Activated CD8-positive, alpha-beta T cell treated with anti-CD3 and anti-CD28 coated beads for 36 hours (primary cell): ENCODE measurements at regions of chr7 and their contacts with region 1.

Region 1: GRCh38 chr7:100049441-100050311 is at the start of gene ZSCAN21:
- DNase-seq: peak; percentile 84
- ATAC-seq: peak; percentile 93
- H3K4me3 Mint-ChIP-seq: peak within 1 kb of the TSS; percentile 87
- H3K27ac Mint-ChIP-seq: peak within 1 kb of the TSS; percentile 94
- H3K4me1 Mint-ChIP-seq: peaks cover 16% of the 10 kb centered on the region
- H3K27me3 Mint-ChIP-seq: no peaks in the 10 kb centered on the region
- CTCF ChIP-seq: peak; percentile 19
- total RNA-seq, gene ZSCAN21: 6.3 to 6.9 TPM

Region 2: GRCh38 chr7:98548981-98549380 is 1500.7 kb before region 1 on chr7:
- CTCF ChIA-PET with region 1: no interaction called
- POLR2A ChIA-PET with region 1: no interaction called
- intact Hi-C with region 1: no loop called
- DNase-seq: no peak
- ATAC-seq: no peak
- H3K4me3 Mint-ChIP-seq: no peak overlapping the region
- H3K27ac Mint-ChIP-seq: no peak overlapping the region
- H3K4me1 Mint-ChIP-seq: no peaks in the 10 kb centered on the region
- H3K27me3 Mint-ChIP-seq: no peaks in the 10 kb centered on the region
- CTCF ChIP-seq: no peak

Region 3: DNA sequence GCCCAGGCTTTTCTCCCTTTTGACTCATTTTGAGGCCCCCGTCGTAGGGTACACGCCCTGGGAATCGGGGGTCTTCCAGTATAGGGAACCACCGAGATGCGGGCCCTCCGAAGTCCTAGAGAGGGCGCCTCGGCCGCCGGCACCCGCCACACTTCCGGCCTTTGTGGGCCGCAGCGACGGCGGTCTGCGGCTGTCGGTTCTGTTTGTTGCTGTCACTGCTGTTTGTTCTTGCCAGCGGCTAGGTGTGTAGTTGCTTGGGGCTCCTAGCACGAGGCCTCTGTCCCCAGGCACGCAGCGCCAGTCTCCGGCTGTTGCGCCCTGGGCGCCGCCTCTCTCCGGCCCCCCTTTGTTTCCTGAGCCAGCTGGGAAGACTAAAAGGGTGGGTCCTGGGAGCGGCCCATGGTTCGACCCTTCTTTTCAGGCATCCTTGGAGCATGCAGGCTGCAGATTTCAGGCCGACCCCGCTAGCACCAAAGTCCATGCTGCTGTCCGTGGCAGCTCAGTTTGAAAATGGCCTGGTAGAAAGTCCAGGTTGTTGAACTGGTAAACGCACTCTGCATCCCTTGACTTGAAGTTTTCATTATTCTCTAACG is 52.0 kb before region 1 on chr7:
- CTCF ChIA-PET with region 1: interaction called, 20 read pairs
- POLR2A ChIA-PET with region 1: no interaction called
- intact Hi-C with region 1: no loop called
- DNase-seq: peak; percentile 84
- ATAC-seq: peak; percentile 91
- H3K4me3 Mint-ChIP-seq: peak overlapping the region; percentile 75
- H3K27ac Mint-ChIP-seq: peak overlapping the region; percentile 89
- H3K4me1 Mint-ChIP-seq: peaks cover 15% of the 10 kb centered on the region
- H3K27me3 Mint-ChIP-seq: no peaks in the 10 kb centered on the region
- CTCF ChIP-seq: no peak

Region 4: DNA sequence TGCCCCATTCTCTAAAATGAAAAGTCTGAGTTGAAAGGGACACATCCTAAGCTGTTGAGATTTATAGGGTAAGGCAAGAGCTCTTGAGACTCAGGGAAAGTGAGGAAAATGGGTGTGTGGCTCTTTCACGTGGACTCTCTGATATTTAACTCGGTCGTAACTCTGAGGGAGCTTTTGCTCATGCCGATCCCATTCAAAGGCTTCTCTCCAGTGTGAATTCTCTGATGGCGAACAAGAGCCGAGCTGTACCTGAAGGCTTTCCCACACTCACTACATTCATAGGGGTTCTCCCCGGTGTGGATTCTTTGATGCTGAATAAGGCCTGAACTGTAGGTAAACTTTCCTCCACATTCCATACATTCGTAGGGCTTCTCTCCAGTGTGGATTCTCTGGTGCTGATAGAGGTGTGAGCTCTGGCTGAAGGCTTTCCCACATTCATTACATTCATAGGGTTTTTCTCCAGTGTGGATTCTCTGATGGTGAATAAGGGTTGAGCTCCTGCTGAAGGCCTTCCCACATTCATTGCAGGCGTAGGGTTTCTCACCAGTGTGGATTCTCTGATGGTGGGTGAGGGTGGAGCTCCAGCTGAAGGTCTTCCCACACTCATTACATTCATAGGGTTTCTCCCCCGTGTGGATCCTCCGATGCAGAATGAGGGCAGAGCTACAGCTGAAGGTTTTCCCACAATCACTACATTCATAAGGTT is 21.5 kb after region 1 on chr7:
- CTCF ChIA-PET with region 1: no interaction called
- POLR2A ChIA-PET with region 1: interaction called, 10 read pairs
- intact Hi-C with region 1: no loop called
- DNase-seq: no peak
- ATAC-seq: no peak
- H3K4me3 Mint-ChIP-seq: no peak overlapping the region
- H3K27ac Mint-ChIP-seq: no peak overlapping the region
- H3K4me1 Mint-ChIP-seq: no peaks in the 10 kb centered on the region
- H3K27me3 Mint-ChIP-seq: no peaks in the 10 kb centered on the region
- CTCF ChIP-seq: no peak

Region 5: DNA sequence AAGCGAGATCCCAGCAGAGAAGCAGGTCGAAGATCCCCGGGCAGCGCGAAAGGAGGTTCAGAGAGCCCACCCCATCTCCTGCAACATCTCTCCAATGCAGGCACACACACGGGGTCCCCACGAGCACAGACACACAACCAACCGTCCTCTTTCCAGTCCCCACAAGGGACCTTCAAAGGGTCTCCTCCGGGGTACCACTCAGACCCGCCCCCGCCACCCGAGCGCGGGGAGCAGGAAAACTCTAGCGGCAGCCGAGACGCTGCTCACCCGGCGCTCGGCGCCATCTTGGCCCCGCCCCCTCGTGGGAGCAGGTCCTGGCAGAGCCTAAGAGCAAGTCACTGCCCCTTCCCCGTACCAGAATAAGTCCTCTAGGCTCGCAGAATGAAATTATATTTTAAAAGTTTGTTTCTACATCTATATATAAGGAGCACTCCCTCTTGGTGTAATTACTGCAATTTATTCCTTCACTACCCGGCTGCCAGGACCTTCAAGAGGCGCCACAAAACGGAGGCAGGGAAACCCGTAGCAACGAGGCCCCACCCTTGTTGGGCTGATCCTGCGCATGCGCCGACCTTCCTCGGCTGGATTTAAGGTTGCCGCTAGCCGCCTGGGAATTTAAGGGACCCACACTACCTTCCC is 69.5 kb after region 1 on chr7 and contains the starts of genes CNPY4 and TAF6:
- CTCF ChIA-PET with region 1: no interaction called
- POLR2A ChIA-PET with region 1: no interaction called
- intact Hi-C with region 1: no loop called
- DNase-seq: peak; percentile 95
- ATAC-seq: peak; percentile 78
- H3K4me3 Mint-ChIP-seq: peak within 1 kb of the TSS; percentile 89
- H3K27ac Mint-ChIP-seq: peak within 1 kb of the TSS; percentile 89
- H3K4me1 Mint-ChIP-seq: peaks cover 18% of the 10 kb centered on the region
- H3K27me3 Mint-ChIP-seq: no peaks in the 10 kb centered on the region
- CTCF ChIP-seq: no peak
- total RNA-seq, gene CNPY4: 9.8 to 10.4 TPM
- total RNA-seq, gene TAF6: 48.6 to 55.3 TPM